Activated T-helper 1 cell treated with anti-CD3 and anti-CD28 coated beads, Interleukin-12 subunit alpha, Interleukin-12 subunit beta, Interleukin-2, Interleukin-4 antibody, amounts not matched to agents 30 ng/mL and 10 ng/mL and 1 ng/mL, durations not matched to agents 14 hours and 24 hours and 36 hours (primary cell): ENCODE measurements at regions of chr12 and their contacts with region 1.

Region 1: GRCh38 chr12:71663561-71664294 is at the start of gene ZFC3H1:
- DNase-seq: peak; percentile 90
- H3K4me3 Mint-ChIP-seq: peak within 1 kb of the TSS; percentile 97
- H3K27ac Mint-ChIP-seq: peak within 1 kb of the TSS; percentile 99
- H3K4me1 Mint-ChIP-seq: peaks cover 44% of the 10 kb centered on the region
- H3K27me3 Mint-ChIP-seq: no peaks in the 10 kb centered on the region
- total RNA-seq, gene ZFC3H1: 57.7 and 58.6 TPM in 2 replicates

Region 2: DNA sequence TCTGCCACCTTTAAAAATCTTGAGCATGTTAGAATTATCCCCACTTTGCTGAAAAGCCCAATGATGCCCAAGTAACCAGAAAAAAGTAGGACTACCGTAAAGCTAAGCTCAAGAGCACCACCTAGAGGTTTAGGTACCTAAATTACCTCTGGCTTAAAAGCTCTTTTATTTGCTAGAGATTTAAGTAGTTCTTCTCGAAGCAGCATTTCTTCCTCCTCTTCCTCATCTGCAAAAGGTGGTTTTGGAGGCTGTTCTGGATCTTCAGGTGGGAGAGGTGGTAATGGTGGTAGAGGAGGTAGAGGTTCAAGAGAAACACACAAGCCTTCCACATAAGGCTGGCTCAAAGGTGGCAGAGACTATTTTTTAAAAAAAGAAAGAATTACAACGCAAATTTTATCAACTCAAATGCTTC is 27.0 kb before region 1 on chr12:
- intact Hi-C with region 1: loop called (anchors 2 kb)
- DNase-seq: no peak
- H3K4me3 Mint-ChIP-seq: no peak overlapping the region
- H3K27ac Mint-ChIP-seq: peak overlapping the region; percentile 6
- H3K4me1 Mint-ChIP-seq: peaks cover 18% of the 10 kb centered on the region
- H3K27me3 Mint-ChIP-seq: no peaks in the 10 kb centered on the region

Region 3: GRCh38 chr12:71746983-71747611 is 83.4 kb after region 1 on chr12:
- intact Hi-C with region 1: loop called (anchors 2 kb)
- DNase-seq: peak; percentile 12
- H3K4me3 Mint-ChIP-seq: no peak overlapping the region
- H3K27ac Mint-ChIP-seq: no peak overlapping the region
- H3K4me1 Mint-ChIP-seq: no peaks in the 10 kb centered on the region
- H3K27me3 Mint-ChIP-seq: peaks cover 36% of the 10 kb centered on the region

Region 4: DNA sequence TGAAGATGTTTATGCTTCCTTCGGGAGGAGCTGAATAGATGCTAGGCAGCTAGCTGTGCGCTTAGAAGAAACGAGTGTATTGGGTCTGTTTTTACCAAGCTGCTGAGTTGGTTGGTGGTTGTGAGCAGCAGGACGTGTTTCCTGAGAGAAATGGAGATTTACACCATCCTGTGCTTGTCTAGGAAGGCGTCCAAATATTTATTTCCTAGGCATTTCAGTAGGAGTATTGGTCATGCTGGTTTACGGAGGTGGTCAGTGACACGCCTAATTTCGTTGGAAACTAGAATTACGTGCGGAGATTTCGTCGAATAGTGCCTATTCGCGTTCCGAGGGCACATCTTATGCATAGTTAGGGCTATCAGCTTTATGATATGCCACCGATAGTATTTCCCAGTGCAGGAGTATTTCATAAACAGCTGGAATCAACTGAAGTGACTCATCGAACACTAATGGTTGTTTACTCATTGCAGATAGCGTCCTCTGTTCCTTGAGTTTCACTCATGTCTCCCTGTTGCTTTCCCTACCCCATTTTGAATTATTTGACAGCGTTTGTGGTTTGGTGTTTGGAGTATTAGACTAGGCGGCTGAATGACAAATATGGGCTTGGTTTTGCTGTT is 176.6 kb after region 1 on chr12:
- intact Hi-C with region 1: loop called (anchors 1 kb)
- DNase-seq: peak; percentile 10
- H3K4me3 Mint-ChIP-seq: peak overlapping the region; percentile 90
- H3K27ac Mint-ChIP-seq: peak overlapping the region; percentile 92
- H3K4me1 Mint-ChIP-seq: peaks cover 34% of the 10 kb centered on the region
- H3K27me3 Mint-ChIP-seq: no peaks in the 10 kb centered on the region

Region 5: GRCh38 chr12:72017054-72017651 is 353.4 kb after region 1 on chr12:
- intact Hi-C with region 1: no loop called
- DNase-seq: peak; percentile 45
- H3K4me3 Mint-ChIP-seq: no peak overlapping the region
- H3K27ac Mint-ChIP-seq: no peak overlapping the region
- H3K4me1 Mint-ChIP-seq: no peaks in the 10 kb centered on the region
- H3K27me3 Mint-ChIP-seq: peaks cover 12% of the 10 kb centered on the region